Heart left ventricle (tissue), 16 donors: ENCODE measurements at regions of chr6 and their contacts with region 1.

Region 1: DNA sequence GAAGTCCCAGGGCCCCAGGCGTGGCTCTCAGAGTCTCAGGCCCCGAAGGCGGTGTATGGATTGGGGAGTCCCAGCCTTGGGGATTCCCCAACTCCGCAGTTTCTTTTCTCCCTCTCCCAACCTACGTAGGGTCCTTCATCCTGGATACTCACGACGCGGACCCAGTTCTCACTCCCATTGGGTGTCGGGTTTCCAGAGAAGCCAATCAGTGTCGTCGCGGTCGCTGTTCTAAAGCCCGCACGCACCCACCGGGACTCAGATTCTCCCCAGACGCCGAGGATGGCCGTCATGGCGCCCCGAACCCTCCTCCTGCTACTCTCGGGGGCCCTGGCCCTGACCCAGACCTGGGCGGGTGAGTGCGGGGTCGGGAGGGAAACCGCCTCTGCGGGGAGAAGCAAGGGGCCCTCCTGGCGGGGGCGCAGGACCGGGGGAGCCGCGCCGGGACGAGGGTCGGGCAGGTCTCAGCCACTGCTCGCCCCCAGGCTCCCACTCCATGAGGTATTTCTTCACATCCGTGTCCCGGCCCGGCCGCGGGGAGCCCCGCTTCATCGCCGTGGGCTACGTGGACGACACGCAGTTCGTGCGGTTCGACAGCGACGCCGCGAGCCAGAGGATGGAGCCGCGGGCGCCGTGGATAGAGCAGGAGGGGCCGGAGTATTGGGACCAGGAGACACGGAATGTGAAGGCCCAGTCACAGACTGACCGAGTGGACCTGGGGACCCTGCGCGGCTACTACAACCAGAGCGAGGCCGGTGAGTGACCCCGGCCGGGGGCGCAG is at the start of gene HLA-A:
- DNase-seq: peak; percentile 94 to 97 (median 95)
- ATAC-seq: peak; percentile 97 to 99 (median 98)
- H3K4me3 ChIP-seq: peak within 1 kb of the TSS; percentile 53 to 92 (median 72)
- H3K27ac ChIP-seq: peak within 1 kb of the TSS; percentile 74 to 98 (median 90)
- H3K4me1 ChIP-seq: peaks cover 0 to 35% (median 0%) of the 10 kb centered on the region in 12 donors
- H3K27me3 ChIP-seq: no peaks in the 10 kb centered on the region
- CTCF ChIP-seq: no peak
- POLR2A ChIP-seq: peak; percentile 55 to 98
- total RNA-seq, gene HLA-A: 263 to 1,427 (median 361) TPM

Region 2: DNA sequence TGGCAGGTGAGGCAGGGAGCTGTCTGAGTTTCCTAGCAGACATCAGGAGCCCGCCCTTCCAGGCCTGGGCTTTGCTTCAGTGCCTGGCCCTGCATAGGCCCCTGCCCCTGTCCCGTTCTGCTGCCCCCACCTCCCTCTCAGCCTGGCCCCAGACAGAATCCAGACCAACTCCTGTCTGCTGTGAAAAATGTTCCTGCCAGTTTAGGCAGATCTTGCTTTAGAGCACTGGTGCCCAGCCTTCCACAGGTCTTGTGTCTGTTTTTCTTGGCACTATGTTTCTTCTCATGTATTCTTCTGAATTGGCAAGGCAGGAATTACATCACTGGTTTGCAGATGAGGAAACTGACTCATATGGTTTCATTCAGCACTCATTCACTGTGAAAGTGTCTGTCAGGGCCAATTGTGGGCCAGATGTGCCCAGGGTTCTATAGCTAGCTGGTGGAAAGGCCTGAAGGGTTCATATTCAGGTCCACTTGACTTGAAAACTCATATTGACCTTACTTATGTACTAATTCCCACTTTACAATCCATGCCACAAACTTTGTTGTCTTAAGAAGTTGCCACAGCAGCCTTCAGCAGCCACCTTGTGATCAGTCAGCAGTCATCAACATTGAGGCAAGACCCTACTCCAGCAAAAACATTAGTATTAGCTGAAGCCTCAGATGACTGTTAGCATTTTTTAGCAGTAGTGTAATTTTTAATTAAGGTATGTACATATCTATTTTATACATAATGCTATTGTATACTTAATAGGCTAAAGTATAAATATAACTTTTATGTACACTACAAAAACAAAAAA is 178.8 kb before region 1 on chr6:
- intact Hi-C with region 1: no loop called
- DNase-seq: no peak
- ATAC-seq: peak in 3 of 4 donors; percentile 49 to 76 (median 72)
- H3K4me3 ChIP-seq: no peak overlapping the region
- H3K27ac ChIP-seq: peak overlapping the region in 3 of 12 donors; percentile 19 to 26 (median 25)
- H3K4me1 ChIP-seq: peaks cover 0 to 21% (median 0%) of the 10 kb centered on the region in 12 donors
- H3K27me3 ChIP-seq: no peaks in the 10 kb centered on the region
- CTCF ChIP-seq: no peak
- POLR2A ChIP-seq: no peak

Region 3: GRCh38 chr6:29887819-29888776 is 54.4 kb before region 1 on chr6:
- intact Hi-C with region 1: loop called in 2 of 10 experiments (anchors 2 to 5 kb)
- DNase-seq: peak; percentile 68 to 91 (median 82)
- ATAC-seq: peak; percentile 78 to 92 (median 90)
- H3K4me3 ChIP-seq: peak overlapping the region in 11 of 12 donors; percentile 50 to 93 (median 70)
- H3K27ac ChIP-seq: peak overlapping the region in 11 of 12 donors; percentile 49 to 96 (median 87)
- H3K4me1 ChIP-seq: peaks cover 0 to 17% (median 0%) of the 10 kb centered on the region in 12 donors
- H3K27me3 ChIP-seq: no peaks in the 10 kb centered on the region
- CTCF ChIP-seq: no peak
- POLR2A ChIP-seq: no peak

Region 4: GRCh38 chr6:29964887-29965562 is 22.6 kb after region 1 on chr6:
- intact Hi-C with region 1: loop called in 3 of 10 experiments (anchors 2 kb)
- DNase-seq: peak; percentile 81 to 90 (median 87)
- ATAC-seq: peak; percentile 79 to 93 (median 90)
- H3K4me3 ChIP-seq: peak overlapping the region; percentile 12 to 77 (median 56)
- H3K27ac ChIP-seq: peak overlapping the region; percentile 84 to 98 (median 90)
- H3K4me1 ChIP-seq: peaks cover 15 to 58% (median 47%) of the 10 kb centered on the region in 12 donors
- H3K27me3 ChIP-seq: no peaks in the 10 kb centered on the region
- CTCF ChIP-seq: no peak
- POLR2A ChIP-seq: peak in 1 of 2 donors; percentile 61

Region 5: GRCh38 chr6:31037682-31038081 is 1095.2 kb after region 1 on chr6:
- intact Hi-C with region 1: no loop called
- DNase-seq: no peak
- ATAC-seq: no peak
- H3K4me3 ChIP-seq: no peak overlapping the region
- H3K27ac ChIP-seq: no peak overlapping the region
- H3K4me1 ChIP-seq: peaks cover 0 to 8% (median 0%) of the 10 kb centered on the region in 12 donors
- H3K27me3 ChIP-seq: no peaks in the 10 kb centered on the region
- CTCF ChIP-seq: no peak
- POLR2A ChIP-seq: no peak